B cell (primary cell): ENCODE measurements at regions of chr13 and their contacts with region 1.

Region 1: GRCh38 chr13:76903544-76904162 is 17.4 kb upstream of the KCTD12 start:
- DNase-seq: peak; percentile 76
- ATAC-seq: peak; percentile 85
- H3K4me3 ChIP-seq: no peak overlapping the region
- H3K4me3 Mint-ChIP-seq: no peak overlapping the region
- H3K27ac ChIP-seq: no peak overlapping the region
- H3K27ac Mint-ChIP-seq: no peak overlapping the region
- H3K4me1 ChIP-seq: no peaks in the 10 kb centered on the region
- H3K4me1 Mint-ChIP-seq: no peaks in the 10 kb centered on the region
- H3K27me3 ChIP-seq: peaks cover 0 to 9% (median 0%) of the 10 kb centered on the region in 4 experiments
- H3K27me3 Mint-ChIP-seq: peaks cover 24% of the 10 kb centered on the region
- CTCF ChIP-seq: peak; percentile 100

Region 2: DNA sequence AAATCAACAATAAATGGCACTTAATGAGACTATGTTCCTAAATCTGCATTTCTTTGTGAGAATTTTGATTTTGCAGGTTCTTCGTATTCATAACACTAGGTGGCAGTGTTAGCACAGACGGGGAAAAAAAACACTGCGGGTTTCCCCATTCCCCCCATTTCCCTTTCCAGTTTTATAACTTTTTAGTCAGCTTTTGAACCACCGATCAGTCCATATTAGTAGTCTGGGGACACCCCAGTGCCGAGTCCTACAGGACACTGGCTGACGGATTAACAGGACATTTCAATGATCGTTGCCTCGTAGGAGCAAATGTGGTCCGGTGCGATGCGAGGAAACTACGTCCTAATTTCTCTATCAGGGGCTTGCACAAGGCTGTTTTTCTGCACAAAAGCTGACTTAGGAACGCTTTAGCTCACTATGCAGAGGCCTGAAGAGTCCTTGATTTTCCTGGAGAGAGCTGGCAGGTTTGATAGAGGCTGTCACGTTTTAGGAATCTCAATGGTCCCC is 1033.2 kb before region 1 on chr13:
- CTCF ChIA-PET with region 1: interaction called, 292 read pairs
- POLR2A ChIA-PET with region 1: no interaction called
- intact Hi-C with region 1: loop called (anchors 1 kb)
- DNase-seq: peak; percentile 37
- ATAC-seq: no peak
- H3K4me3 ChIP-seq: peak overlapping the region in 1 of 5 experiments; percentile 7
- H3K4me3 Mint-ChIP-seq: peak overlapping the region; percentile 10
- H3K27ac ChIP-seq: no peak overlapping the region
- H3K27ac Mint-ChIP-seq: no peak overlapping the region
- H3K4me1 ChIP-seq: no peaks in the 10 kb centered on the region
- H3K4me1 Mint-ChIP-seq: peaks cover 3% of the 10 kb centered on the region
- H3K27me3 ChIP-seq: peaks cover 0 to 8% (median 3%) of the 10 kb centered on the region in 4 experiments
- H3K27me3 Mint-ChIP-seq: peaks cover 30% of the 10 kb centered on the region
- CTCF ChIP-seq: peak; percentile 96

Region 3: DNA sequence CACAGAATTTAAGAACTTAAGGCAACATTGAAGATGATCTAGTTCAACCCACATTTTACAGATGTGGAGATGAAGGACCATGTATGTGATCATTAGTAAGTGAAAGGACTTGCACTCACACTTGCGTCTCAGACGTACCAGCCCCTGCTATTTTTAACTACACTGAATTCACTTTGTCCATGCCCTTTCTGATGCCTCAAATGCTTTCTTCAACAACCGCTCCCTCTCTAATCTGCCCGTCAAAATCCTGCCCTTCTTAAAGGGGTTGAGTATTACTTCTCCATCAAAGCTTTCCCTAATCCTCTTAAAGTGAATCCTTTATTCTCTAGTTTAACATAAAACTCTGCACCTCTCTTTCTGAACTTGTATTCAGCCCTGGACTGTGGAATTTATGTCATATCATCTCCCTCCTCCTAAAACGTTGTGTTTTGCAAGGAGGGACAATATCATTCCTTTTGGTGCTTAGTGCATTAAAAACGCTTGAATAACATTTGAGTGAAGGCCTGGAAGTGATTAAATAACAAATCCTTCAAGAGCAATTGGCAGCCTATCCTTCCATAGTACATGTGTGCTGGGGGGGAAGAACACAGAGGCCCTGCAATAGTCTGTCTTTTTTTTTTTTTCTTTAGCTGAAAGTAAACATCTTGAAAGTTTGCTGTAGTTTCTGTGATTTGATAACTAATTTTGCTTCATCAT is 774.2 kb before region 1 on chr13:
- CTCF ChIA-PET with region 1: no interaction called
- POLR2A ChIA-PET with region 1: no interaction called
- intact Hi-C with region 1: no loop called
- DNase-seq: no peak
- ATAC-seq: no peak
- H3K4me3 ChIP-seq: no peak overlapping the region
- H3K4me3 Mint-ChIP-seq: no peak overlapping the region
- H3K27ac ChIP-seq: no peak overlapping the region
- H3K27ac Mint-ChIP-seq: no peak overlapping the region
- H3K4me1 ChIP-seq: no peaks in the 10 kb centered on the region
- H3K4me1 Mint-ChIP-seq: no peaks in the 10 kb centered on the region
- H3K27me3 ChIP-seq: no peaks in the 10 kb centered on the region
- H3K27me3 Mint-ChIP-seq: no peaks in the 10 kb centered on the region
- CTCF ChIP-seq: no peak

Region 4: DNA sequence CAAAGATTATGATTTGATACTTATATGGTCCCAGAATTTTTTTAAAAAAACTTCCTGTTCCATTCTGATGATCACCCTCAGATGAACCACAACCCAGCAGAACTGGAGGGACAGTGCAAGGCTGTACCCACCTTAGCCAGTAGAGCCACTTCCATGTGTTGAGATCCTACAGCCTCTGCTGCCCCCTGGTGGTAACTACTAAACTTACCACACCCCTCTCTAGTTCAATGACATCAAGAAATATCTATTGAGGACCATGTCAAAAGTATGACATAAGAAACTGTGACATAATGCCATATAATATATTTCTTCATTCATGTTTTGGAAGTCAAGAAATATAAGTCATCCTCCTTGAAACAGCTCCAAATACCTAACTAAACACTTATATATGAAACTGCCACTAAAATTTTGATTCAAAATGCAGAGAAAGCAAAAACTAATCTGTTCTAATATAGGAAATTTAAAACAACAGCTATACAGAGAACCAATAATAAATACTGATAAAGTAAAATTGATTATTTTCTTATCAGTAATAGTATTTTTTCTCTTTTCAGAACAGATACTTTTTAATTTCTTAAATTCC is 430.0 kb before region 1 on chr13:
- CTCF ChIA-PET with region 1: interaction called, 7 read pairs
- POLR2A ChIA-PET with region 1: no interaction called
- intact Hi-C with region 1: loop called (anchors 2 kb)
- DNase-seq: peak; percentile 68
- ATAC-seq: peak; percentile 68
- H3K4me3 ChIP-seq: no peak overlapping the region
- H3K4me3 Mint-ChIP-seq: no peak overlapping the region
- H3K27ac ChIP-seq: no peak overlapping the region
- H3K27ac Mint-ChIP-seq: no peak overlapping the region
- H3K4me1 ChIP-seq: no peaks in the 10 kb centered on the region
- H3K4me1 Mint-ChIP-seq: no peaks in the 10 kb centered on the region
- H3K27me3 ChIP-seq: no peaks in the 10 kb centered on the region
- H3K27me3 Mint-ChIP-seq: peaks cover 6% of the 10 kb centered on the region
- CTCF ChIP-seq: peak; percentile 82

Region 5: GRCh38 chr13:76677043-76677442 is 226.6 kb before region 1 on chr13:
- CTCF ChIA-PET with region 1: no interaction called
- POLR2A ChIA-PET with region 1: no interaction called
- intact Hi-C with region 1: loop called (anchors 10 kb)
- DNase-seq: no peak
- ATAC-seq: no peak
- H3K4me3 ChIP-seq: no peak overlapping the region
- H3K4me3 Mint-ChIP-seq: no peak overlapping the region
- H3K27ac ChIP-seq: no peak overlapping the region
- H3K27ac Mint-ChIP-seq: no peak overlapping the region
- H3K4me1 ChIP-seq: no peaks in the 10 kb centered on the region
- H3K4me1 Mint-ChIP-seq: no peaks in the 10 kb centered on the region
- H3K27me3 ChIP-seq: no peaks in the 10 kb centered on the region
- H3K27me3 Mint-ChIP-seq: peaks cover 10% of the 10 kb centered on the region
- CTCF ChIP-seq: no peak

Region 6: GRCh38 chr13:76822698-76823267 is 80.9 kb before region 1 on chr13:
- CTCF ChIA-PET with region 1: interaction called, 11 read pairs
- POLR2A ChIA-PET with region 1: no interaction called
- intact Hi-C with region 1: loop called (anchors 5 kb)
- DNase-seq: no peak
- ATAC-seq: peak; percentile 33
- H3K4me3 ChIP-seq: no peak overlapping the region
- H3K4me3 Mint-ChIP-seq: no peak overlapping the region
- H3K27ac ChIP-seq: no peak overlapping the region
- H3K27ac Mint-ChIP-seq: no peak overlapping the region
- H3K4me1 ChIP-seq: no peaks in the 10 kb centered on the region
- H3K4me1 Mint-ChIP-seq: no peaks in the 10 kb centered on the region
- H3K27me3 ChIP-seq: no peaks in the 10 kb centered on the region
- H3K27me3 Mint-ChIP-seq: peaks cover 8% of the 10 kb centered on the region
- CTCF ChIP-seq: no peak